ENCODE measurements at regions of chrX and their contacts with region 1.

Region 1: DNA sequence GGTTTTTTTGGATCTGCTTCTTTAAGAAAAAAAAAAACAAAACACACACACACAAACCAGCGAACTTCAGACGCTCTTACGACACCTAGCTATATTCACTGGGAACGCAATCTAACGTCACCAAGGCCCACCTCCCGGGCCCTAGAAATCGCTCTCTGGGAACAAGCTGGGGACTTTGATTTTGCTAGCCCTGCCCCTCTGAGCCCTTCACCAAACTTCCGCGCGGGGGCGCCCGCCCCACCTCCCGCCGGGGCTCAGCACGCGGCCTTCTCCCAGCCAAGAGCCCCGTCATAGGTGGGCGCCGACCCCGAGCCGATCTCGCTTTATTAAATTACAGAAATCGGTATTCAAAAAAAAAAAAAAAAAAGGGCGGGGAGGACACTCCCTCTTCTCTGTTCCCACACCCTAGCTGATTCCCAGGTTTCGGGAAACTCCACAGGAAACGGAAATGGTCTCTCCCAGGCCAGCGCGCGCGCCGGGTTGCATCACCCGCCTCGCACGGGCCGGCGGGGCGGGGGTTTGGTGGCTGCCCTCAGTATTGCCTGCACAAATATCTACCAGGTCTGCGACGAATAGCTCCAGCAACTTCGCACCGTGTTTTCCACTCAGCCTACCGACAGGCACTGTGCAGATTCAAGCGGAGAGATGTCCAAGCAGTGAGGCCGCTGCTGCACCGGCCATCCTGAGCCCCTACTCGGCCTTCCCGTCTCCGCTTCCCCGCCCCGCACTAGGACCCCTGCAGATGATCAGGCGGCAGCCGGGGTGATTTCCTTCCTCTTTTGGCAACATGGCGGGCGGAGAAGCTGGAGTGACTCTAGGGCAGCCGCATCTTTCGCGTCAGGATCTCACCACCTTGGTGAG is at the start of gene EIF2S3:
- DNase-seq: peak; percentile 85
- H3K4me3 Mint-ChIP-seq: no peak within 1 kb of the TSS
- H3K27ac Mint-ChIP-seq: peak within 1 kb of the TSS; percentile 100
- H3K4me1 Mint-ChIP-seq: peaks cover 14% of the 10 kb centered on the region
- H3K27me3 Mint-ChIP-seq: no peaks in the 10 kb centered on the region
- total RNA-seq, gene EIF2S3: 199 to 209 TPM

Region 2: GRCh38 chrX:23515028-23515427 is 539.4 kb before region 1 on chrX:
- CTCF ChIA-PET with region 1: no interaction called
- POLR2A ChIA-PET with region 1: no interaction called
- DNase-seq: no peak
- H3K4me3 Mint-ChIP-seq: no peak overlapping the region
- H3K27ac Mint-ChIP-seq: no peak overlapping the region
- H3K4me1 Mint-ChIP-seq: no peaks in the 10 kb centered on the region
- H3K27me3 Mint-ChIP-seq: no peaks in the 10 kb centered on the region

Region 3: DNA sequence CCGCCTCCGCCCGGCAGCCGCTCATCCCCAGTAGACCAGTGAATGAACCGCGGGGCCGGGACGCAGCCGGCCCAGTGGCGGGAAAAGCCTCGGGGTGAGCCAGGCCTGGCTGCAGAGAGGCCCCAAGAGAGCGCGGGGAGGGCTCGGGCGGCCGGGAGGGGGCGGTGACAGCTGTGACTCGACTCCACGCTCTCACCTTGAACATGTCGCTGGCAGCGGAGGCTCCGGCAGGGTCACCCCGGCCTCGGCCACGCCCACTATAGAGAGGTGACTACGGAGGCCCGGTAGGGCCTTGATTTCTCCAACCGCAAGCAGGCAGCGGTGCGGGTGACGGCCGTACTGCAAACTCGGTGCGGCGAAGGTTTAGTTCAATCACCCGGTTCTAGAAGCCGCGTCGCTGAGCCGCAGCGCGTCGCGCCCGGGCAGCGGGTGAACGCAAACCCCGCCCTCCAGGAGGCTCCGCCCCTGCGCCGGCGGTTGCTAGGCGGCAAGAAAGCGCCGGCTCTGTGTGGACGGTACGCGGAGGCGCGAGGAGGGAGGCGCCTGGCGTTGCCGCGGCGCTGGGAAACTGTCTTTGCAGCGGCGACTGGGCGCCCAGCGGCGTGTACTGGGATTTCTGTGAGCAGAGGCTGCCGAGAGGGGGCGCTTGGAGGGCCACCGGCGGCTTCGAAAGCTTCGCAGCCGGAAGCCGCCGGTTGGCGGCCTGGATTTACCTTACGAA is 146.8 kb before region 1 on chrX and contains the starts of genes APOO and CXorf58:
- CTCF ChIA-PET with region 1: interaction called, 25 read pairs
- POLR2A ChIA-PET with region 1: interaction called, 8 read pairs
- DNase-seq: peak; percentile 91
- H3K4me3 Mint-ChIP-seq: peak within 1 kb of the TSS; percentile 77
- H3K27ac Mint-ChIP-seq: peak within 1 kb of the TSS; percentile 91
- H3K4me1 Mint-ChIP-seq: peaks cover 23% of the 10 kb centered on the region
- H3K27me3 Mint-ChIP-seq: no peaks in the 10 kb centered on the region
- total RNA-seq, gene APOO: 26.6 to 28.5 TPM
- total RNA-seq, gene CXorf58: not detected

Region 4: GRCh38 chrX:23952984-23953907 is 101.2 kb before region 1 on chrX:
- CTCF ChIA-PET with region 1: interaction called, 11 read pairs
- POLR2A ChIA-PET with region 1: no interaction called
- DNase-seq: peak; percentile 59
- H3K4me3 Mint-ChIP-seq: peak overlapping the region; percentile 79
- H3K27ac Mint-ChIP-seq: peak overlapping the region; percentile 94
- H3K4me1 Mint-ChIP-seq: peaks cover 19% of the 10 kb centered on the region
- H3K27me3 Mint-ChIP-seq: no peaks in the 10 kb centered on the region

Region 5: GRCh38 chrX:24014388-24015018 is 39.9 kb before region 1 on chrX:
- CTCF ChIA-PET with region 1: interaction called, 11 read pairs
- POLR2A ChIA-PET with region 1: no interaction called
- DNase-seq: peak; percentile 12
- H3K4me3 Mint-ChIP-seq: peak overlapping the region; percentile 54
- H3K27ac Mint-ChIP-seq: peak overlapping the region; percentile 82
- H3K4me1 Mint-ChIP-seq: peaks cover 37% of the 10 kb centered on the region
- H3K27me3 Mint-ChIP-seq: no peaks in the 10 kb centered on the region

Region 6: GRCh38 chrX:24024819-24025740 is 29.3 kb before region 1 on chrX:
- CTCF ChIA-PET with region 1: interaction called, 38 read pairs
- POLR2A ChIA-PET with region 1: interaction called, 3 read pairs
- DNase-seq: peak; percentile 80
- H3K4me3 Mint-ChIP-seq: peak overlapping the region; percentile 91
- H3K27ac Mint-ChIP-seq: peak overlapping the region; percentile 93
- H3K4me1 Mint-ChIP-seq: peaks cover 30% of the 10 kb centered on the region
- H3K27me3 Mint-ChIP-seq: peaks cover 4% of the 10 kb centered on the region

Region 7: GRCh38 chrX:24090300-24091200 is 36.1 kb after region 1 on chrX:
- CTCF ChIA-PET with region 1: no interaction called
- POLR2A ChIA-PET with region 1: no interaction called
- DNase-seq: no peak
- H3K4me3 Mint-ChIP-seq: no peak overlapping the region
- H3K27ac Mint-ChIP-seq: no peak overlapping the region
- H3K4me1 Mint-ChIP-seq: no peaks in the 10 kb centered on the region
- H3K27me3 Mint-ChIP-seq: no peaks in the 10 kb centered on the region

Measured in activated CD4-positive, alpha-beta T cell treated with anti-CD3 and anti-CD28 coated beads, Interleukin-2, amount 10 ng/mL, durations not matched to agents 7 days and 5 days (primary cell).